Activated CD4-positive, alpha-beta T cell treated with anti-CD3 and anti-CD28 coated beads, Interleukin-2, amount 10 ng/mL, durations not matched to agents 24 days and 14 days (primary cell): ENCODE measurements at regions of chr14 and their contacts with region 1.

Region 1: GRCh38 chr14:24114536-24115450 is at the starts of genes DCAF11 and NRL:
- DNase-seq: peak; percentile 99
- H3K4me3 Mint-ChIP-seq: peak within 1 kb of the TSS; percentile 99
- H3K27ac Mint-ChIP-seq: peak within 1 kb of the TSS; percentile 100
- H3K4me1 Mint-ChIP-seq: peaks cover 34% of the 10 kb centered on the region
- H3K27me3 Mint-ChIP-seq: peaks cover 2% of the 10 kb centered on the region
- total RNA-seq, gene DCAF11: 55.8 and 57.3 TPM in 2 replicates
- total RNA-seq, gene NRL: 0.96 and 1.2 TPM in 2 replicates

Region 2: DNA sequence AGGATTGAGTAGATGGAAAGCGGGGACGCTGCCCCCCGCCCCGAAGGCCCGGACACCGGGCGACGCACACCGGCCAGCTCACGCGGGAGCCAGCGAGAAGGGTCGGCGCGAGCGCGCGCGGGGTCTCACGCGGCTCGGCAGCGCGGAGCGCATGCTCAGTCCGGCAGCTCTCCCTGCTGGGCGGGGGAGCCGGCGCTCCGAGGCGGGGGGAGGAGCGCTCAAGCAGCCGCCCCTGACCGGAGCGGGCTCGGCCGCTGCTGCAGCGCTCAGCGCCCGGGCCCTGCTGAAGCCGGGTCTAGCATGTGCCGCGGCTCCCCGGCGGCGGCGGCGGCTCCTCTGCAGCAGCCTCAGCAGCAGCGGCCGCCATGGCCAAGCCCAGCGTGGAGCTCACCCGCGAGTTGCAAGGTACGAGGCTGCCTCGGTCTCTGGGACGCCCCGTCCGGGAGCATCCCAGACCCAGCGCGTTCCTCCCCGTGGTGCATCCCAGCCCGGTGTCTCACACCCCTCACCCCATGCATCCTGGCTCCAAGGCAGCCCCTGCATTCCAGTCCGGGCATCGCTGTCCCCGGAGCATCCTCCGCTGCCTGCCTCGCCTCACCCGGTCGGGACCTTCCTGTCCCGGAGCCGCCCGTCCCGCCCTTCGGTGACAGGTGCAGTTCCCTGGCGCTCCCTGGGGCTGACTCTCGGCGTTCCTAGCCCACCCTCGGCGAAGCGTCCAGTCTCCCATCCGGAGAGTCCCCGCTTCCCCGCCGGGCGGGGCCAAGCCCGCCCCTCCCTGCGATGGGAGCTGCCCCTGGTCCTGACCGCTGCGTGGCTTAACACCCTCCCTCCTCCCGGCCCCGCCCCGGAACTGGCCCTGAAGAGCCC is 62.8 kb before region 1 on chr14 and contains the start of gene CARMIL3:
- intact Hi-C with region 1: loop called (anchors 2 kb)
- DNase-seq: peak; percentile 92
- H3K4me3 Mint-ChIP-seq: peak within 1 kb of the TSS; percentile 76
- H3K27ac Mint-ChIP-seq: peak within 1 kb of the TSS; percentile 76
- H3K4me1 Mint-ChIP-seq: peaks cover 20% of the 10 kb centered on the region
- H3K27me3 Mint-ChIP-seq: peaks cover 17% of the 10 kb centered on the region
- total RNA-seq, gene CARMIL3: 1.3 and 1.5 TPM in 2 replicates

Region 3: GRCh38 chr14:24075485-24076301 is 39.1 kb before region 1 on chr14:
- intact Hi-C with region 1: no loop called
- DNase-seq: no peak
- H3K4me3 Mint-ChIP-seq: no peak overlapping the region
- H3K27ac Mint-ChIP-seq: peak overlapping the region; percentile 56
- H3K4me1 Mint-ChIP-seq: peaks cover 23% of the 10 kb centered on the region
- H3K27me3 Mint-ChIP-seq: no peaks in the 10 kb centered on the region

Region 4: DNA sequence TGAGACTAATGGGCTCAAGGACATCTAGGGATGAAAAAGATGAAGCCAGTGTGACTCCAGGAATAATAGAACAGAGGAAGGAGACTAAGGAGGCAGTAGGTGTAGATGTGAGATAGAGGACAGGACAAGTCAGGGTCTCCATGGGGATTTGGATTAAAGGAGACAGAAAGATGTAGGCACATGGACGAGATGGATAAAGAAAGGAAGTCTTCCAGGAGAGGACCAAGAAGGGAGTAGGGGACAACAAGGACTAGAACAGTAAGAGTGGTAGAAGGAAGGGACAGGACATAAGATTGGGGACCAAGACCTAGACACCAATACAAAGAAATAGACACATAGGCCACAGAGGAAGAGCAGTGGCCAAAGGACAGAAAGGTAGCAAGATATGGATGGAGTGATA is 27.8 kb before region 1 on chr14:
- intact Hi-C with region 1: no loop called
- DNase-seq: no peak
- H3K4me3 Mint-ChIP-seq: no peak overlapping the region
- H3K27ac Mint-ChIP-seq: no peak overlapping the region
- H3K4me1 Mint-ChIP-seq: peaks cover 8% of the 10 kb centered on the region
- H3K27me3 Mint-ChIP-seq: peaks cover 3% of the 10 kb centered on the region

Region 5: GRCh38 chr14:24135834-24136542 is 21.2 kb after region 1 on chr14 and contains the start of gene PSME1:
- intact Hi-C with region 1: loop called (anchors 1 kb)
- DNase-seq: peak; percentile 98
- H3K4me3 Mint-ChIP-seq: peak within 1 kb of the TSS; percentile 94
- H3K27ac Mint-ChIP-seq: peak within 1 kb of the TSS; percentile 93
- H3K4me1 Mint-ChIP-seq: peaks cover 49% of the 10 kb centered on the region
- H3K27me3 Mint-ChIP-seq: no peaks in the 10 kb centered on the region
- total RNA-seq, gene PSME1: 300 and 306 TPM in 2 replicates

Region 6: GRCh38 chr14:24160850-24161804 is 46.3 kb after region 1 on chr14 and contains the start of gene IRF9:
- intact Hi-C with region 1: loop called (anchors 1 kb)
- DNase-seq: peak; percentile 100
- H3K4me3 Mint-ChIP-seq: peak within 1 kb of the TSS; percentile 93
- H3K27ac Mint-ChIP-seq: peak within 1 kb of the TSS; percentile 97
- H3K4me1 Mint-ChIP-seq: peaks cover 51% of the 10 kb centered on the region
- H3K27me3 Mint-ChIP-seq: peaks cover 2% of the 10 kb centered on the region
- total RNA-seq, gene IRF9: 138 and 159 TPM in 2 replicates

Region 7: GRCh38 chr14:24232121-24232644 is 117.4 kb after region 1 on chr14 and contains the start of gene NEDD8:
- intact Hi-C with region 1: loop called (anchors 1 kb)
- DNase-seq: peak; percentile 96
- H3K4me3 Mint-ChIP-seq: peak within 1 kb of the TSS; percentile 92
- H3K27ac Mint-ChIP-seq: peak within 1 kb of the TSS; percentile 92
- H3K4me1 Mint-ChIP-seq: peaks cover 41% of the 10 kb centered on the region
- H3K27me3 Mint-ChIP-seq: no peaks in the 10 kb centered on the region
- total RNA-seq, gene NEDD8: 188 and 190 TPM in 2 replicates

Region 8: GRCh38 chr14:24351517-24351916 is 236.7 kb after region 1 on chr14:
- intact Hi-C with region 1: no loop called
- DNase-seq: no peak
- H3K4me3 Mint-ChIP-seq: no peak overlapping the region
- H3K27ac Mint-ChIP-seq: no peak overlapping the region
- H3K4me1 Mint-ChIP-seq: peaks cover 3% of the 10 kb centered on the region
- H3K27me3 Mint-ChIP-seq: peaks cover 62% of the 10 kb centered on the region